ENCODE measurements at regions of chr14 and their contacts with region 1.

Region 1: GRCh38 chr14:50333006-50333509 is 20.9 kb downstream of the DMAC2L start:
- DNase-seq: no peak
- ATAC-seq: no peak
- H3K4me3 ChIP-seq: no peak overlapping the region
- H3K4me3 Mint-ChIP-seq: no peak overlapping the region
- H3K27ac ChIP-seq: no peak overlapping the region
- H3K27ac Mint-ChIP-seq: no peak overlapping the region
- H3K4me1 ChIP-seq: peaks cover 2 to 7% of the 10 kb centered on the region in 2 experiments
- H3K4me1 Mint-ChIP-seq: peaks cover 15% of the 10 kb centered on the region in 3 donors
- H3K27me3 ChIP-seq: no peaks in the 10 kb centered on the region
- H3K27me3 Mint-ChIP-seq: no peaks in the 10 kb centered on the region

Region 2: DNA sequence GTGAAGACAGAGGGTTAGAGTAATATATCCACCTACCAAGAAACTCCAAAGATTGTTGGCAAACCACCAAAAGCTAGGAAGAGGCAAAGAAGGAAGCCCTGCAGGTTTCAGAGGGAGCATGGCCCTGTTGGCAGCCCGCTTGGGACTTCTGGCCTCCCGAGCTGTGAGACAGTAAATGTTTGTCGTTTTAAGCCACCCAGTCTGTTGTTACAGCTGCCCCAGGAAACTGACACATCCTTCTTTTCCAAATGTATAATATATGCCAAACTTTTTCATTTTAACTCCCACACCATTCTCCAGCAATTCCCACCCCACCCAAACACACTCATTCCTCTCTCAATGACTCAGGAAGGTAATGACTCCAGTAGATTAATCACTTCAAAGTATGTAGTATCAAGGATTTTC is 820.9 kb before region 1 on chr14:
- CTCF ChIA-PET with region 1: no interaction called
- POLR2A ChIA-PET with region 1: no interaction called
- DNase-seq: no peak
- ATAC-seq: no peak
- H3K4me3 ChIP-seq: no peak overlapping the region
- H3K4me3 Mint-ChIP-seq: no peak overlapping the region
- H3K27ac ChIP-seq: no peak overlapping the region
- H3K27ac Mint-ChIP-seq: no peak overlapping the region
- H3K4me1 ChIP-seq: no peaks in the 10 kb centered on the region
- H3K4me1 Mint-ChIP-seq: no peaks in the 10 kb centered on the region
- H3K27me3 ChIP-seq: peaks cover 0 to 4% of the 10 kb centered on the region in 2 experiments
- H3K27me3 Mint-ChIP-seq: peaks cover 0 to under 1% of the 10 kb centered on the region in 2 donors

Region 3: DNA sequence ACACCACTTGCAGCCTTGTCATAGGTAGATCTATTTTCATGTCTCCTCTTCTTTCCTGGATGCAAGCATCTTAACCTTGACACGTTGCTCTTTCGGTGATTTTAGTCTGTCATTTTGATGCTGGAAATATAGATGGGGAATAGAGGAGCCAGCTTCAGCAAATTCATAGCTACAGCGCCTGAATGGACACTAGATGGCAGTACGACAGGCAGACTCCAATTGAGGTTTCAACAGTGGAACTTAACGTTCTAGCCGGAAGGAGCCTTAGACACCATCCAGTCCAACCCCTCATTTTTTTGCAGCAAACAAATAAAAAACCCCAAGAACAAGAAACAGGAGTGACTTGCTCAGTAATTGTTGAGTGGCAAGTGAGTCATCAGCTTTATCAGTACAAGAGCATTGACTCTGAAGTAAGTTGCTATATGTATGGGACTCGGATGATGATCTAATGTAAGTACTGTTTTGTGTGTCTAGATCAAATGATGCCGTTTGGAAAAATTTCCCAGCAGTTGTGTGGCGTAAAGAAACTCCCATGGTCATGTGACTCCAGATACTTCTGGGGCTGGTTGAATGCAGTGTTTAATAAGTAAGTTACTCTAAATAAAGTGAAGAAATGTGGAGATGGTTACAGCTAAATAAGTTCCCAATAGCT is 11.9 kb before region 1 on chr14:
- CTCF ChIA-PET with region 1: interaction called, 7 to 12 read pairs
- POLR2A ChIA-PET with region 1: interaction called, 4 to 6 read pairs
- DNase-seq: peak; percentile 25 to 89 (median 61)
- ATAC-seq: peak; percentile 96 to 99 (median 98)
- H3K4me3 ChIP-seq: no peak overlapping the region
- H3K4me3 Mint-ChIP-seq: no peak overlapping the region
- H3K27ac ChIP-seq: peak overlapping the region; percentile 72
- H3K27ac Mint-ChIP-seq: no peak overlapping the region
- H3K4me1 ChIP-seq: no peaks in the 10 kb centered on the region
- H3K4me1 Mint-ChIP-seq: peaks cover 10 to 27% (median 26%) of the 10 kb centered on the region in 3 donors
- H3K27me3 ChIP-seq: no peaks in the 10 kb centered on the region
- H3K27me3 Mint-ChIP-seq: no peaks in the 10 kb centered on the region

Region 4: DNA sequence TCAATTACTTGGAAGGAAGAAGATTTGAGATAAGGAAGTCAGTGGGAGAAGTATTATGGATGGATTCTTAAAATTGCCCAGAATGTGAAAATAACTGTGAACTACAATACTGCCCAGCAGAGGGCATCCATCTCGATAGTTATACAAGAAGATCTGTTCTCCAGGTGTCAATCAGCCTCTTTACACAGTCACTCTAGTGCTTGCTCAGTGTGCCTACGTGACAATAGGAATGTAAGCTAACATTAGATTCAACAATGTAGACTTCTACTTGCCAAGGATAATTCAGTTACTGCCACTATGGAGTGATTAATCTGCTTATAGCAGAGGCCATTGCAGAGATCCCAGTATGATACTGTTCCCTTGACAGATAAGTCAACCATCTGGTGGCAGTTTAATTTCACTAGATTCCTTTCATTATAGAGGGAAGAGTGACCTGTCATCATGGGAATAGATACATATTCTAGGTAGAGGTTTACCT is 209.9 kb after region 1 on chr14:
- CTCF ChIA-PET with region 1: no interaction called
- POLR2A ChIA-PET with region 1: interaction called in 1 of 2 experiments, 14 read pairs
- DNase-seq: peak in 24 of 35 experiments; percentile 1 to 69 (median 23)
- ATAC-seq: peak; percentile 58 to 72 (median 64)
- H3K4me3 ChIP-seq: no peak overlapping the region
- H3K4me3 Mint-ChIP-seq: no peak overlapping the region
- H3K27ac ChIP-seq: no peak overlapping the region
- H3K27ac Mint-ChIP-seq: no peak overlapping the region
- H3K4me1 ChIP-seq: peaks cover 0 to 4% of the 10 kb centered on the region in 2 experiments
- H3K4me1 Mint-ChIP-seq: peaks cover 13 to 19% (median 14%) of the 10 kb centered on the region in 3 donors
- H3K27me3 ChIP-seq: no peaks in the 10 kb centered on the region
- H3K27me3 Mint-ChIP-seq: no peaks in the 10 kb centered on the region

Region 5: DNA sequence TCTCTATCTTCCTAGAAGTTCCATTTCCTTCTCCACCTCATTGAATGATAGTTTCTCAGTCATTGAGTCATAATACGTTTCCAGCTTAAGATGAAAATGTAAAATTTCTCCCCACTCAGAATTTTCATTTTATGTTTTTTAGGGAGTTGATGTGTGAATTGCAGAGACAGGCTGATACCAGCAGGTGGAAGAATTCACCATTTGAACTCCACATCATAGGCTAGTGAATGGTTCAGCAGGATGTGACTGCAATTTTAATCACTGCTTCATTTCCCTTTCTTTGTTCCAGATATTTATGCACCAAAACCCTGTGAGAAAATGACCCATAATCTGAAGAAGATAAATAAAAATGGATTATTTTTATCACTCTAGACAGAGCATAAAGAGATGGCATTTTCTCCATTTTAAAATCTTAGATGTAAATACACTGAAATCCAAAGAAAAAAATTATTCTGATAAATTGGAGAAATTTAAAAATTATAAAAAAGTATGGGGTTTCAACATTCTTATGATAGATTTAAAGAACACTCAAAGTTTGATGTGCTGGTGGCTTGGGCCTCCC is 621.8 kb after region 1 on chr14:
- CTCF ChIA-PET with region 1: no interaction called
- POLR2A ChIA-PET with region 1: no interaction called
- DNase-seq: peak in 1 of 35 experiments; percentile 31
- ATAC-seq: no peak
- H3K4me3 ChIP-seq: no peak overlapping the region
- H3K4me3 Mint-ChIP-seq: no peak overlapping the region
- H3K27ac ChIP-seq: no peak overlapping the region
- H3K27ac Mint-ChIP-seq: no peak overlapping the region
- H3K4me1 ChIP-seq: no peaks in the 10 kb centered on the region
- H3K4me1 Mint-ChIP-seq: no peaks in the 10 kb centered on the region
- H3K27me3 ChIP-seq: peaks cover 0 to 2% of the 10 kb centered on the region in 2 experiments
- H3K27me3 Mint-ChIP-seq: no peaks in the 10 kb centered on the region